Esophagus muscularis mucosa (tissue), 4 donors: ENCODE measurements at regions of chr16 and their contacts with region 1.

Region 1: GRCh38 chr16:75647492-75648264 is at the starts of genes KARS1 and TERF2IP:
- DNase-seq: peak; percentile 98
- H3K4me3 ChIP-seq: peak within 1 kb of the TSS; percentile 72 to 96 (median 90)
- H3K27ac ChIP-seq: peak within 1 kb of the TSS; percentile 92 to 99 (median 96)
- H3K4me1 ChIP-seq: peaks cover 54 to 75% (median 59%) of the 10 kb centered on the region in 4 donors
- H3K27me3 ChIP-seq: no peaks in the 10 kb centered on the region
- CTCF ChIP-seq: no peak
- EP300 ChIP-seq: no peak
- POLR2A ChIP-seq: peak; percentile 84
- total RNA-seq, gene KARS1: 95.1 to 120 (median 102) TPM
- total RNA-seq, gene TERF2IP: 62.3 to 83.7 (median 64.1) TPM

Region 2: DNA sequence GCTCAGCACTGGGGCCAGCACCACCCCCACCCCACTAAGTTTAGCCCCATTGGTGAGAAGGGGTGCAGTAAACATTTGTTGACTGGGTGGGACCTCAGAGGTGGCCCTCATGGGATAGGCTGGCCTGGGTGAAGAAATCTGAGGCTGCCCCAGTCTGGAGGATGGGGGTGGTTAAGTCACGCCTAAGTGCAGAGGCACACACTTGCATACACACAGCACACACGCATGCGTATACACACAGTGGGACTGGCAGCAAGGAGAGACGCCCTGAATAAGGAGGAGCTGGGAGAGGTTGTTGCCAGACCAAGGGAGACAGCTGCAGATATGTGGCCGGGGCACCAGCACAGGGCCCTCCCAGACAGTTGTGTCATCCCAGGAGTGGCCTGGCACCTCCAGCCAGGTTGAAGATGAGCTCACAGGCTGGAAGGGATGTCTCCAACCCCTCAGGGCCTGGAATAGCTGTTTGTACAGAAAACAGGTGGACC is 393.3 kb before region 1 on chr16:
- intact Hi-C with region 1: no loop called
- DNase-seq: no peak
- H3K4me3 ChIP-seq: no peak overlapping the region
- H3K27ac ChIP-seq: peak overlapping the region; percentile 90 to 95 (median 92)
- H3K4me1 ChIP-seq: peaks cover 87 to 99% (median 94%) of the 10 kb centered on the region in 4 donors
- H3K27me3 ChIP-seq: no peaks in the 10 kb centered on the region
- CTCF ChIP-seq: no peak
- EP300 ChIP-seq: no peak
- POLR2A ChIP-seq: no peak

Region 3: GRCh38 chr16:75361936-75362335 is 285.7 kb before region 1 on chr16:
- intact Hi-C with region 1: no loop called
- DNase-seq: no peak
- H3K4me3 ChIP-seq: no peak overlapping the region
- H3K27ac ChIP-seq: no peak overlapping the region
- H3K4me1 ChIP-seq: peaks cover 0 to 8% (median 3%) of the 10 kb centered on the region in 4 donors
- H3K27me3 ChIP-seq: no peaks in the 10 kb centered on the region
- CTCF ChIP-seq: no peak
- EP300 ChIP-seq: no peak
- POLR2A ChIP-seq: no peak

Region 4: DNA sequence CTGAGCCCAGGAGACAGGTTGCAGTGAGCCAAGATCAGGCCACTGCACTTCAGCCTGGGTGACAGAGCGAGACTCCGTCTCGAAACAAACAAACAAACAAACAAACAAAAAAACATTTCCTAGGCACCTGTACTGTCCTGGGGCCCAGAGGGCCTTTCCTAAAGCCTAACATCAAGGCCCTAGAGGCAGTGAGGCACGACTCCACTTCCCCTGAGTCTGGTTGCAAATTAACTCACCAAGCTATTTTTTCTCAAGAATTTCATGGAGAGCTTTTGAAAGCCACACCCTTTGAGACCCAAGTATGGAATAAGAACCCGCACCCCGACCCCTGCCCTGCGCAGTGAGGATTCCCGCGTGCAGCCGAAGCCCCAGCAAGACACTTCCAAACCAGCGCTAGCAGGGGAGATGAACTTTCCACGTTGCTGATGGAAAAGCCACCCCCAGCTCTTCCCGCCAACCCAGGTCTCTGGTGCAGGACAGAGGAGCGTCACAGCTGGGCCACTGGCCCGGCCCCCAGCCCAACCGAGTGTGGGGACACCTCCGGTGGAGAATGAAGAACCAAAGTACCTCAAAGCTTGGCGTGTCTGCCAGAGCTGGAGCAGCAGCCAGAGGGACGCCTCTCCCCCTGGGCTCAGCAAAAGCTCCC is 113.0 kb before region 1 on chr16:
- intact Hi-C with region 1: no loop called
- DNase-seq: no peak
- H3K4me3 ChIP-seq: no peak overlapping the region
- H3K27ac ChIP-seq: no peak overlapping the region
- H3K4me1 ChIP-seq: no peaks in the 10 kb centered on the region
- H3K27me3 ChIP-seq: no peaks in the 10 kb centered on the region
- CTCF ChIP-seq: no peak
- EP300 ChIP-seq: no peak
- POLR2A ChIP-seq: no peak

Region 5: GRCh38 chr16:75555707-75556430 is 91.8 kb before region 1 on chr16 and contains the start of gene TMEM231:
- intact Hi-C with region 1: loop called (anchors 10 kb)
- DNase-seq: peak; percentile 99
- H3K4me3 ChIP-seq: peak within 1 kb of the TSS; percentile 82 to 90 (median 82)
- H3K27ac ChIP-seq: peak within 1 kb of the TSS; percentile 78 to 89 (median 85)
- H3K4me1 ChIP-seq: peaks cover 8 to 25% (median 19%) of the 10 kb centered on the region in 4 donors
- H3K27me3 ChIP-seq: no peaks in the 10 kb centered on the region
- CTCF ChIP-seq: no peak
- EP300 ChIP-seq: no peak
- POLR2A ChIP-seq: no peak
- total RNA-seq, gene TMEM231: 6.8 to 15.5 (median 10.5) TPM

Region 6: GRCh38 chr16:75764154-75764768 is 116.6 kb after region 1 on chr16:
- intact Hi-C with region 1: loop called (anchors 2 kb)
- DNase-seq: no peak
- H3K4me3 ChIP-seq: no peak overlapping the region
- H3K27ac ChIP-seq: peak overlapping the region in 1 of 4 donors; percentile 20
- H3K4me1 ChIP-seq: peaks cover 0 to 7% (median 5%) of the 10 kb centered on the region in 4 donors
- H3K27me3 ChIP-seq: no peaks in the 10 kb centered on the region
- CTCF ChIP-seq: peak; percentile 77 to 82 (median 78)
- EP300 ChIP-seq: no peak
- POLR2A ChIP-seq: no peak